Ascending aorta (tissue), 2 donors: ENCODE measurements at regions of chr5 and their contacts with region 1.

Region 1: DNA sequence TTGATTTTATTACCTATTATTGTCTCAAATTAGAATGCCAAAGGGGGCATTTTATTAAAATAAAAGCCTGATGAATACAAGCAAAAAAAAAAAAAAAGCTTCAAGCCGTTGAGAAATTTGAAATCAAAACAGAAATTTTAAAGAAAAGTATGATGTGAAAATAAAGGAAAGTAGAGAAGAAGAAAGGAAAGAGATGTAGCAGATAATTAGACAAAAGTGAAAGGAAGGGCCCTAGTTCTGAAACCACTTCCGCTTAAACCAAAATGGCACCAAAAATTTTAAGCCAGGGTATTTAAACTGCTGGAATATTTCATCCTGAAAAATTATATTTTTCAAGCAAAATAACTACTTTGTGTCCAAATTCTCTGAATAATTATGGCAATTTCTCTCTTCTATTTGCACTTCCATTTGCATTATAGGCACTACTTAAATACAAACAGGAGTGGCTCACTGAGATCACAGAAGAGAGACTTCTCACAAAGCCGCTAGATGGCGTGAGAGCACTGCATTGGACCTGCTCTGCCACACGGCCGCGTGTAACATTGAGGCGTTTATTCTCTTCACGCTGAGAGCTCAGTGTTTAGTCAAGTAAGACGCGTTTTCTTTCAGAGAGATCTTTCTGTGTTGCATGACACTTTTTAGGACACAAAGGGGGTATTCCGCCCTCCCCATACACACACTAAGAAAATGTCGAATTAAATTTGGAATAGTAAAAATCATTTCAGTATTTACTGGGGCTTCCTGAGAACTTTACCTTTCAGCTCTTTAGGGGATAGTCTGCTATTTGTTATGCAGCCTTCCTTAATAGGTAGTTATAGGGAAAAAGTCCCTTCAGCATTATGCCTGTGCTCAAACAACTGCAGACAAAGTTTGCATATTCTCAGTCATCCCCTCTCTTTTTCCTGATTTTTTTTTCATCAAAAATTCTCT is 368.4 kb upstream of the CCNH start:
- DNase-seq: peak in 1 of 2 donors; percentile 78
- H3K4me3 ChIP-seq: no peak overlapping the region
- H3K27ac ChIP-seq: no peak overlapping the region
- H3K4me1 ChIP-seq: no peaks in the 10 kb centered on the region
- H3K27me3 ChIP-seq: no peaks in the 10 kb centered on the region
- CTCF ChIP-seq: peak; percentile 70 to 87 (median 74)

Region 2: DNA sequence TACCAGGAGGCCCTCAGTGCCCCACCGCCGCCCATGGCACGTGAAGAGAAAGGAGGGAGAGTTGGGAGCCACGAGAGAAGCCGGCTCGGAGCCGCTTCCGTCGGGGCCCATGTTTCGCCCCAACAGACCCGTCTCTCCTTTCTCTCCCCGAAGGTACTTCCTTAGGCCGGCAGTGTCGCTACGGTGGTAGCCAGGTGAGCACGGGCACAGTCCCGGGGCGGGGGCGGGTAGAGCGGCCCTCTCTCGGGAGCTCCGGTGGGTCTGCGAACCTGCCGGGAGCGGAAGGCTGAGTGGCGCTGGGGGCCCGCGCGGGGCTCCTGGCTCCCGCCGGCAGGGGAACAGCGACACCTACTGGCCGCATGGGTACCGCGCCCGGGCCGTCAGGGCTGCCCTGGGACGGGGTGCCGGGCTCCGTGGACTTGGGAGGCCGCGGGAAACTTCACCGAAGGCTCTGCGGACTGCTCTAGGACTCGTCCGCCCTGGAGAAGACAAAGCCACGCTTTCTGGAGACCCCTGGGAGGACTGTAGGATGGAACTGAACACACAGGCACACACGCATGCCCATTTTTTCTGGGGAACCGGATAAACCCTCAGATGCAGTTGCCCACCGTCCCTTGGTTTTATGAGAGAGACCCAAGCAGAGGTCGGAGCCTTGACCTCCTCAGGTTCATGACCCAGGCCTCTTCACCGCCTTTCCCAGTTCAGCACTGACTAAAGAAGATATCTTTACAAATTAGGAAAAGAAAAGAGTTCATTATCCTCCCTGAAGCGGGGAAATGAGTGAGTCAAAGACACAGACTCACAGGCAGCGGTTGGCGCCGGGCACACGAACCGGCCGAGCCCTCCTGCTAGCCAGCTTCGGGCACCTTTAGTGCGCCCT is 899.4 kb after region 1 on chr5:
- intact Hi-C with region 1: loop called (anchors 1 kb)
- DNase-seq: no peak
- H3K4me3 ChIP-seq: peak overlapping the region; percentile 55 to 56
- H3K27ac ChIP-seq: no peak overlapping the region
- H3K4me1 ChIP-seq: peaks cover 0 to 6% of the 10 kb centered on the region in 2 donors
- H3K27me3 ChIP-seq: peaks cover 66% of the 10 kb centered on the region
- CTCF ChIP-seq: peak; percentile 74 to 94 (median 87)

Region 3: DNA sequence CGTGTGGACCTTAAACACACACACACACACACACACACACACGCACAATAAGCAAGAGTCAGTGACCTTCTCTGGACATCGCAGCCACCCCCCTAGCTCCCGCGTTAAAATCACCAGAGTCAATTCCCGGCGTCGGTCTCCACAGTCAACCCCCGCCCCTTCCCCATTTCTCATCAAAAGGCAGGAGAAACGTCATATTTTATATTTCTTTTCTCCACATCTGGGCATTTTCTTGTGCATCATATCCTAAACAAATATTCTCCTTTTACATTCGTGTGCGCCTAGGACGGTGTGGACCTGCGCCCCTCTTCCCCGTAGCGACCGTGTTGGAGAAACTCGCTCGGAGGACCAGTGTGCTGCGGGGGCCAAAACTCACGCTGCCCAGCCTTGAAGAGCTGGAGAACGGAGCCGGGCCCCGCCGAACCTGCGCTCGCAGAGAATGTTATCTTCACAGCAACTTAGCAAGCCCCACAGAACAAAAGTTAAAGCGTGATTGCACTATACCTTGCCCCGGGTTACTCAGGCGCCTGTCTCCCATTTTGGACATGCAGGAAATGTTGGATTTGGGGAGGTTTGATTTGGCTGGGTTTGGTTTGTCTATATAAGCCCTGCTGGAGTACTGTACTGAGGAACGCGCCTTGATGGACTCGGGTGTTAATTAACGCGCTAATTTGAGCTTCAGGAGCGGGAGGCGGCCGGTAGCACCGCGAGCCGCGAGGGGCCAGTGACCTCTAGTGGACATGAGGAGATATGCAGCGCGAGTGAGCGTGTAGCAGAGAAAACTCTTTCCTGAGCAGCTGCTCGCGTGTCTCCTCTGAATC is 909.5 kb after region 1 on chr5:
- intact Hi-C with region 1: loop called (anchors 1 kb)
- DNase-seq: peak in 1 of 2 donors; percentile 85
- H3K4me3 ChIP-seq: peak overlapping the region; percentile 27 to 52
- H3K27ac ChIP-seq: no peak overlapping the region
- H3K4me1 ChIP-seq: peaks cover 0 to 15% of the 10 kb centered on the region in 2 donors
- H3K27me3 ChIP-seq: peaks cover 46% of the 10 kb centered on the region
- CTCF ChIP-seq: peak; percentile 62 to 97 (median 93)